ENCODE measurements at regions of chr14 and their contacts with region 1.

Region 1: DNA sequence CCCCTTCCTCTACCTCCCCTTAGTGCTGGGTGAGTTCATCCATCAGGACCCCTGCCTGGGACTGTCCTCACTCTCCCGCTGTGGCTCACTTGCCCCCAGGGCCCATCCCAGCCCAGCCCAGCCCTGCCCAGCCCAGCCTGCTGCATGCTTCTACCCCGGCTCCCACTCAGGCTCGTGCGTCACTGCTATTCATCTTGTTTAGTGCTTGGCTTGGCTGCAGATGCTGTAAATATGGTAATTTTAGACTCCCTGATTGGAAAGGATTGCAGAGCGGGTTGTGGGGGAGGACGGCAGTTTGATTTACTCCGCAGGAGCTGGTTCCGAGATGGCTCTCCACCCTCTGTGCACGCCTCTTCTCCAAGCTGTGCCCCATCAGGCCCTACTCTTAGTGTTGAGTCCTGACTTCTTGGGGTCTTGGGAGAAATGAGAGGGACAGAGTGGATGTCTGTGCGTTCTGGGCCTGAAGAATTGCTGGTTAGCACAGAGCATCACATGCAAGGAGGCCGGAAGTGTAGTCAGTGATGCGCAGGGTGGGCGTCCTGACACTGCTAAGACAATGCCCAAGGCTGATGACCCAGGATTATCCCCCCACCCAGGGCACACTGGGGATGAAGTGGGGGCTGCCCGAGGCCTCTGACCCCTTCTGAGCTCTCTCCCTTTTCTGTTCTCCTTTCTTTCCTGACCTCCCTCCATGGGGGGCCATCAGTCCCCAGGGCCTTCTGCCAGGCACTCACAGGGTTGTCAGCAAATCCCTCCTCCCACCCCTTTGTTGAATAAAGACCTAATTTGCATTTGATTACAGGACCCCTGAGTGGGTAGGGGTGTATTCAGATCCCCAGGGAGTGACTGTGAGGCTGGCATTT is 244.4 kb downstream of the ZFP36L1 start:
- DNase-seq: peak; percentile 87 to 93
- ATAC-seq: peak; percentile 36 to 52
- H3K4me3 ChIP-seq: peak overlapping the region in 2 of 4 donors; percentile 8 to 18
- H3K27ac ChIP-seq: peak overlapping the region; percentile 93 to 99 (median 97)
- H3K4me1 ChIP-seq: peaks cover 69 to 97% of the 10 kb centered on the region in 2 donors
- H3K27me3 ChIP-seq: no peaks in the 10 kb centered on the region
- CTCF ChIP-seq: no peak
- POLR2A ChIP-seq: peak; percentile 67 to 76

Region 2: DNA sequence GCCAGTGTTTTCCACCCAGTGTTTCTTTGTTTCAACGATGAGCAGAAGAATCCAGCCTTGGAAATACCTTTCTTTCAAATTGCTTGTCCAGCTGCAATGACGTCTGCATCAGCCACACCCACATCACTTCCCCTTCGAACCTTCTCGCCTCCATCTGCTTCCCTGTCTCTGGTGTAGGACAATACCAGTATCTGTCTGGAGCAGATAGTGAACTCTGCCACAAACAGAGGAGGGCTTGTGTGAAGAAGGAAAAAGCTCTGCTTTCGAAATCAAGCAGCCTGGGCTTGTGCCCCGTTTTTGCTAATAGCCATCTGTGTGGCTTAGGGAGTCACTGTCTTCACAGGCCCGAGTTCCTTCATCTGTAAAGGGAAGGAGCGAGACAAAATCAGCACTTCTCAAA is 171.0 kb before region 1 on chr14:
- in situ Hi-C with region 1: no loop called
- intact Hi-C with region 1: loop called (anchors 5 kb)
- DNase-seq: peak in 1 of 2 donors; percentile 48
- ATAC-seq: peak; percentile 32 to 42
- H3K4me3 ChIP-seq: no peak overlapping the region
- H3K27ac ChIP-seq: peak overlapping the region; percentile 25 to 61 (median 51)
- H3K4me1 ChIP-seq: peaks cover 20 to 29% of the 10 kb centered on the region in 2 donors
- H3K27me3 ChIP-seq: no peaks in the 10 kb centered on the region
- CTCF ChIP-seq: no peak
- POLR2A ChIP-seq: peak in 1 of 2 donors; percentile 13

Region 3: DNA sequence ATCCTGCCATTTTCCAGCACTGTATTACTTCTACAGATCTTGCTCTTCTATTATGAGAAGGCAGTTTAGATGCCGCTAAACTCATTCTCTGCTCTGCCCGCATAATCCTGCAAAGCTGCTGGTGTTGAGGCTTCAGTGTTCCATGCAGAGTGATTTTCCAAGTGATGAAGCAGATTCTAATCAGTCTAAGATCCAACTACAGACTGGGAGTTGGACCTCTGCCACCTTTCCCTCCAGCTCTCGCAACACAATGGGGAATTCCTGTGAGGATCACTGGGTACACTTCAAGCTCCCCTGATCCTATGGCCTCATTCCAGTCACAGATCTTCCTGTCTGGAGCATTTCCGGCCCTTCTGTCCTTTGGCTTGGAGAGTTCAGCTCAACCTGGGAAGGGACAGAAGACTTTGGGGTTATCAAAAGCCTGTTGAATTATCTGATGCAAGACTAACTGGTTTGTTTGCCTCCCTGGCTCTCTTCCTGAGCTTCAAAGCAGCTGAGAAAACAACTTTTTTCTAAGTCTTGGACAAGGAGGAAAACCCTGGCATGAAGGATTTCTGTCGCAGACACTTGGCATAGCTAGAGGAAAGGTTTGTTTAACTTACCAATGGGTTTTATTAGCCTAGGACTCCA is 89.5 kb before region 1 on chr14:
- in situ Hi-C with region 1: loop called in 1 of 4 experiments (anchors 10 kb)
- intact Hi-C with region 1: no loop called
- DNase-seq: peak; percentile 39 to 64
- ATAC-seq: peak; percentile 10 to 26
- H3K4me3 ChIP-seq: no peak overlapping the region
- H3K27ac ChIP-seq: peak overlapping the region; percentile 71 to 81 (median 76)
- H3K4me1 ChIP-seq: peaks cover 24 to 28% of the 10 kb centered on the region in 2 donors
- H3K27me3 ChIP-seq: no peaks in the 10 kb centered on the region
- CTCF ChIP-seq: no peak
- POLR2A ChIP-seq: no peak

Region 4: DNA sequence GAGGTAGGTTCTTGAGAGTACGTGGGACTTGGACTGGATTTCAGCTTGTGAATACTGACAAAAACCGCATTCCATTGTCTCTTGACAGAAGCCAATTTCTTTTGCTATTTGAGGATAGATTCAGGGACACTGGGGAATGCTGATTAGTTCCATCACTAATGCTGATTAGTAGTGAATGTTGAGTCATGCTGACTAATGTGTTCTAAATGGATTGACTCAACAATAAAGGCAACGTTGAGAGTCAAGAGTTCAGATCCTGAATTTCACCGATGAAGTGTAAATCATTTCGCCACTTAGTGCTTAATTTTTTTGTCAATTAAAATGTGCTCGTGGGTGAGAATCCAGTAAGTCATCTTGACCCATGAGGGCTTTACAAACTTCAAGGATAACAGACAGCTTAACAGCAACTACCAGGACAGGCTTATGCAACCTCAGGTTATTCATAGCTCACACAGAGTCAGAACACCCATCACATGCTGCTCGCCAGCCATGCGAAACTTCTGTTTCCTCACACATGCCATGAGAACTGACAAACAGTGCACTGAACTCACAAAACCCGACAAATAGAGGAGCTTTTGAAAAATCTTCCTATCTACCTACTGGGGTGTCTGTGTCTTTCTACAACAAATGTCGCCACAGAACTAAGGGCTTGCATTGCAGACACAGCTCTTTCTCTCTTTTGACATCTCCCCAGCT is 72.1 kb before region 1 on chr14:
- in situ Hi-C with region 1: loop called in 1 of 4 experiments (anchors 5 kb)
- intact Hi-C with region 1: loop called (anchors 2 kb)
- DNase-seq: peak; percentile 84 to 89
- ATAC-seq: peak; percentile 95 to 98
- H3K4me3 ChIP-seq: no peak overlapping the region
- H3K27ac ChIP-seq: peak overlapping the region; percentile 84 to 95 (median 86)
- H3K4me1 ChIP-seq: peaks cover 30 to 45% of the 10 kb centered on the region in 2 donors
- H3K27me3 ChIP-seq: no peaks in the 10 kb centered on the region
- CTCF ChIP-seq: no peak
- POLR2A ChIP-seq: peak; percentile 29

Region 5: GRCh38 chr14:68583555-68584280 is 35.3 kb after region 1 on chr14:
- in situ Hi-C with region 1: no loop called
- intact Hi-C with region 1: loop called (anchors 1 kb)
- DNase-seq: peak; percentile 77 to 92
- ATAC-seq: peak; percentile 85 to 93
- H3K4me3 ChIP-seq: no peak overlapping the region
- H3K27ac ChIP-seq: peak overlapping the region; percentile 72 to 84 (median 80)
- H3K4me1 ChIP-seq: peaks cover 26 to 32% of the 10 kb centered on the region in 2 donors
- H3K27me3 ChIP-seq: no peaks in the 10 kb centered on the region
- CTCF ChIP-seq: no peak
- POLR2A ChIP-seq: no peak

Region 6: DNA sequence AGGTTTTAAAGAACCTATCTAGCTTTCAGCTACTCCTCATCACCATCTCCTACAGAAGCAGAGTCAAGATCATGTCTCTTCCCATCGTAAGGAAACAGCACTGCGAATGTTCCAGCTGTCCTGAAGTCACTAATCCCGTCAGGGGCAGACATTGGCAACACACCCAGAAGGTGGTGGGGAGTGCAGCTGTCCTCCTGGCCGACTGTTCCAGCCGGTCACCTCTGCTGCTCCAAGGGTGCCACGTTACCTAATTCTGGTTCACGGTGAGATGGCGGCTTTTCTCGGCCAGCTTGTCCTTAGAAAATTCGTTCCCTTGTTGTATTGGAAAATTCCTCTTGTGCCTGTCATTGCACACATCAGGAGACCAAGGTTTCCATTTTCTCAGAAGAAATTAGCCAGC is 48.3 kb after region 1 on chr14:
- in situ Hi-C with region 1: no loop called
- intact Hi-C with region 1: loop called (anchors 2 kb)
- DNase-seq: peak; percentile 90 to 95
- ATAC-seq: peak; percentile 87 to 94
- H3K4me3 ChIP-seq: no peak overlapping the region
- H3K27ac ChIP-seq: peak overlapping the region; percentile 79 to 82 (median 81)
- H3K4me1 ChIP-seq: peaks cover 23 to 45% of the 10 kb centered on the region in 2 donors
- H3K27me3 ChIP-seq: no peaks in the 10 kb centered on the region
- CTCF ChIP-seq: no peak
- POLR2A ChIP-seq: peak; percentile 33 to 34

Region 7: DNA sequence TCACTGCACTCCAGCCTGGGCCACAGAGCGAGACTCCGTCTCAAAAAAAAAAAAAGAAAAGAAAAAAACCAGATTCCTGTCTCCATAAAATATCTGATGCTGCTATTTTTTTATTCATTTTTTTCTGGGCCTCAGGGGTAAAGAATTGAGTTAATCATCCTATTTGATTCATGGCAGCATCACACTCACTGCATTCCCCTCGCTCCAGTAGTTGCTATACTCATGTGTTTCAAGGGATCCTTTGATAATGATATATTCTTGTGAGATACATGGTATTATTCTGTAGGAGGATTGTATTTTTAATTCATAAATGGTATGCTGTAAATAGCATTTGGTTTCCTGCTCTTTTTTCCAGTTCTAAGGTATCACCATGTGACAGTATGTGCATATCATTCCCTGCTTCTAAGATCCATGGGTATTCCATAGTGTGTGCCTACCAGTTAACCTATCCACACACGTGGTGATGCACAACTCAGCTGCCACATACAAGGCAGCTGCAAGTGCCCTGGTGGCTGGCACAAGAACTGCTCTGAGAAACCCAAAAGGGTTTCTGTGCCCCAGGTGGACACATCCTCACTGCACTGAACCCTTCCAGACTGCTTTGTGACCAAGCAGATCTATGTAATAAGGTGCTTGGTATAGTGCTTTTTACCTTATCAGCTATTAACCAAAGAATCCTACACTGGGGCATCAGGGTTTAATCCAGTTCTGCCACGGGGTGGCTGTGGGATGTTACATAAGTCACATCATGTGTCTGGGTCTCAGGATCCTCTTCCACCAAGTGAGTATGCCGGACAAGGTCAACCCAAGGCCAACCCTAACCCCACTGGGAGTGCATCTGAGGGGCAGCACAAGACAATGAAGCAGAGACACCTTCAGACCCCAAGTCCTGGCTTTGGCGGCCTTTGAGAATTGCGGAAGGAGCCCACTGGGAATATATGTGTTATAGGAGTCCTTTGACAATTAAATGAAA is 169.9 kb after region 1 on chr14:
- in situ Hi-C with region 1: no loop called
- intact Hi-C with region 1: no loop called
- DNase-seq: no peak
- ATAC-seq: no peak
- H3K4me3 ChIP-seq: no peak overlapping the region
- H3K27ac ChIP-seq: no peak overlapping the region
- H3K4me1 ChIP-seq: peaks cover 0 to 8% of the 10 kb centered on the region in 2 donors
- H3K27me3 ChIP-seq: no peaks in the 10 kb centered on the region
- CTCF ChIP-seq: peak in 3 of 5 experiments; percentile 16 to 26 (median 25)
- POLR2A ChIP-seq: no peak